ENCODE measurements at regions of chr10 and their contacts with region 1.

Region 1: GRCh38 chr10:30671026-30671616 is 41.6 kb upstream of the LYZL2 start:
- DNase-seq: peak; percentile 38
- ATAC-seq: peak; percentile 82
- H3K4me3 Mint-ChIP-seq: peak overlapping the region; percentile 50
- H3K27ac Mint-ChIP-seq: no peak overlapping the region
- H3K4me1 Mint-ChIP-seq: peaks cover 4% of the 10 kb centered on the region
- H3K27me3 Mint-ChIP-seq: peaks cover 5% of the 10 kb centered on the region
- CTCF ChIP-seq: peak; percentile 85

Region 2: GRCh38 chr10:30553625-30554439 is 117.3 kb before region 1 on chr10:
- CTCF ChIA-PET with region 1: no interaction called
- POLR2A ChIA-PET with region 1: no interaction called
- intact Hi-C with region 1: no loop called
- DNase-seq: no peak
- ATAC-seq: no peak
- H3K4me3 Mint-ChIP-seq: no peak overlapping the region
- H3K27ac Mint-ChIP-seq: no peak overlapping the region
- H3K4me1 Mint-ChIP-seq: peaks cover 3% of the 10 kb centered on the region
- H3K27me3 Mint-ChIP-seq: peaks cover 1% of the 10 kb centered on the region
- CTCF ChIP-seq: no peak

Region 3: DNA sequence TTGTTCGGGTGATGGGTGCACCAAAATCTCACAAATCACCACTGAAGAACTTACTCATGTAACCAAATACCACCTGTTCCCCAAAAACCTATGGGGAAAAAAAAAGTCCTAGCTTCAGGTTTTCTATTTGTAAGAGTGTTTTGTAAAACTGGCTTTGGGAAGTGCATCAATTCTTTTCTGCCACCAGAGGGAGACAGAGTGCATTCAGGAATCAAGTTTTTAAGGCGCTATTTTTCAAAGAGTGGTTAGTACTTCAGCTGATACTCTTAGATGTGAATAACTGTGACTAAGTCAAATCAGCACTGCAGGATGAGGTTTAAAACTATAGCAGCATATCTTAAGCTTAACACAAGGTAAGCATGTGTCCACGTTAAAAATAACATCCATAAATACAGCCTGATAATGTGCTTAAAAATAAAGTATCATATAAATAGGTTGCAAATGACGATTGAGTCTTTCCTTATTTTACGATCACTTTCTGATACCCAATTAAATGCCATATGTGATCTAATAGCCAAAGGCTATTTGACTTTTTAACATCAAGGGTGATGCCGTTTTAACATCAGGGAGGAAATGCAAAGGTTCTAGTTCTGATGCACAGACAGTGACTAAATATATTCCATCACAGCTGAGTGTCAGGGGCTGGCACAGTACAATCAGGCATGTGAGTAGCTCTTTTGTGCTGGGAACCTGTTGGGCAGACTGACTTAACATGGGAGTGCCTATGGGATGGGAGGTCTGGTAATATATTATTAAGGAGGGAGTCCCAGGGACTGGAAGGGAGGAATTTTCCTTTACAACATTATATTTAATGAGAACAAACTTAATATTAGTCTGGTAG is 31.0 kb before region 1 on chr10:
- CTCF ChIA-PET with region 1: interaction called, 28 read pairs
- POLR2A ChIA-PET with region 1: no interaction called
- intact Hi-C with region 1: no loop called
- DNase-seq: peak; percentile 33
- ATAC-seq: peak; percentile 26
- H3K4me3 Mint-ChIP-seq: no peak overlapping the region
- H3K27ac Mint-ChIP-seq: no peak overlapping the region
- H3K4me1 Mint-ChIP-seq: peaks cover 4% of the 10 kb centered on the region
- H3K27me3 Mint-ChIP-seq: peaks cover 28% of the 10 kb centered on the region
- CTCF ChIP-seq: peak; percentile 88

Region 4: GRCh38 chr10:30687698-30688219 is 16.6 kb after region 1 on chr10:
- CTCF ChIA-PET with region 1: interaction called, 48 read pairs
- POLR2A ChIA-PET with region 1: no interaction called
- intact Hi-C with region 1: no loop called
- DNase-seq: peak; percentile 87
- ATAC-seq: peak; percentile 64
- H3K4me3 Mint-ChIP-seq: no peak overlapping the region
- H3K27ac Mint-ChIP-seq: peak overlapping the region; percentile 7
- H3K4me1 Mint-ChIP-seq: peaks cover 37% of the 10 kb centered on the region
- H3K27me3 Mint-ChIP-seq: peaks cover 10% of the 10 kb centered on the region
- CTCF ChIP-seq: peak; percentile 94

Region 5: GRCh38 chr10:30709229-30709628 is 38.1 kb after region 1 on chr10:
- CTCF ChIA-PET with region 1: interaction called, 12 read pairs
- POLR2A ChIA-PET with region 1: no interaction called
- intact Hi-C with region 1: no loop called
- DNase-seq: no peak
- ATAC-seq: no peak
- H3K4me3 Mint-ChIP-seq: no peak overlapping the region
- H3K27ac Mint-ChIP-seq: no peak overlapping the region
- H3K4me1 Mint-ChIP-seq: peaks cover 21% of the 10 kb centered on the region
- H3K27me3 Mint-ChIP-seq: no peaks in the 10 kb centered on the region
- CTCF ChIP-seq: peak; percentile 37

Region 6: GRCh38 chr10:30722956-30723620 is 52.0 kb after region 1 on chr10:
- CTCF ChIA-PET with region 1: interaction called, 28 read pairs
- POLR2A ChIA-PET with region 1: no interaction called
- intact Hi-C with region 1: no loop called
- DNase-seq: no peak
- ATAC-seq: no peak
- H3K4me3 Mint-ChIP-seq: no peak overlapping the region
- H3K27ac Mint-ChIP-seq: no peak overlapping the region
- H3K4me1 Mint-ChIP-seq: no peaks in the 10 kb centered on the region
- H3K27me3 Mint-ChIP-seq: no peaks in the 10 kb centered on the region
- CTCF ChIP-seq: no peak

Region 7: DNA sequence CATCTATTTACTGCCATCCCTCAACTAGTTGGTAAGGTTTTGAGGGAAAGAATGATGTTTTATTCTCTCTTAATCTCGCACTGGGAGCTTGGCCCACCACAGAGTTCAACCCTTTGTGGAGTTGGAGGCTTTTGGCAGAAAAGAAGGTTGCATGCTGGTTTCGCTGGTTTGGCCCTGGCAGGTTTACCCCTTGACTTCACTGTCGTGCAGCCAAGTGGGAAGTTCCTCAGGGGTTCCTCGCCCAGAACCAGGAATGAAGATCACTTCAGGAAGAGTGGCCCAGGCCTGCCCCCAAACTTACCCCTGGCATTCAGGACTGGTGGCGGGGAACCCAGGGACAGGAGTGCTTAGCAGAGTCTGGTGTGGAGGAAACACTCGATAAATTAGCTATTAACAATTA is 61.5 kb after region 1 on chr10:
- CTCF ChIA-PET with region 1: interaction called, 12 read pairs
- POLR2A ChIA-PET with region 1: no interaction called
- intact Hi-C with region 1: no loop called
- DNase-seq: no peak
- ATAC-seq: no peak
- H3K4me3 Mint-ChIP-seq: no peak overlapping the region
- H3K27ac Mint-ChIP-seq: no peak overlapping the region
- H3K4me1 Mint-ChIP-seq: peaks cover 6% of the 10 kb centered on the region
- H3K27me3 Mint-ChIP-seq: peaks cover 3% of the 10 kb centered on the region
- CTCF ChIP-seq: no peak